AG04450 (cell line): ENCODE measurements at regions of chr1 and their contacts with region 1.

Region 1: GRCh38 chr1:200620273-200621131 is at the start of gene KIF14:
- DNase-seq: peak; percentile 61
- H3K4me3 ChIP-seq: peak within 1 kb of the TSS; percentile 90
- H3K27ac ChIP-seq: peak within 1 kb of the TSS; percentile 83
- H3K27me3 ChIP-seq: no peaks in the 10 kb centered on the region
- CTCF ChIP-seq: no peak
- polyA plus RNA-seq, gene KIF14: 1.5 and 2.9 TPM in 2 replicates

Region 2: DNA sequence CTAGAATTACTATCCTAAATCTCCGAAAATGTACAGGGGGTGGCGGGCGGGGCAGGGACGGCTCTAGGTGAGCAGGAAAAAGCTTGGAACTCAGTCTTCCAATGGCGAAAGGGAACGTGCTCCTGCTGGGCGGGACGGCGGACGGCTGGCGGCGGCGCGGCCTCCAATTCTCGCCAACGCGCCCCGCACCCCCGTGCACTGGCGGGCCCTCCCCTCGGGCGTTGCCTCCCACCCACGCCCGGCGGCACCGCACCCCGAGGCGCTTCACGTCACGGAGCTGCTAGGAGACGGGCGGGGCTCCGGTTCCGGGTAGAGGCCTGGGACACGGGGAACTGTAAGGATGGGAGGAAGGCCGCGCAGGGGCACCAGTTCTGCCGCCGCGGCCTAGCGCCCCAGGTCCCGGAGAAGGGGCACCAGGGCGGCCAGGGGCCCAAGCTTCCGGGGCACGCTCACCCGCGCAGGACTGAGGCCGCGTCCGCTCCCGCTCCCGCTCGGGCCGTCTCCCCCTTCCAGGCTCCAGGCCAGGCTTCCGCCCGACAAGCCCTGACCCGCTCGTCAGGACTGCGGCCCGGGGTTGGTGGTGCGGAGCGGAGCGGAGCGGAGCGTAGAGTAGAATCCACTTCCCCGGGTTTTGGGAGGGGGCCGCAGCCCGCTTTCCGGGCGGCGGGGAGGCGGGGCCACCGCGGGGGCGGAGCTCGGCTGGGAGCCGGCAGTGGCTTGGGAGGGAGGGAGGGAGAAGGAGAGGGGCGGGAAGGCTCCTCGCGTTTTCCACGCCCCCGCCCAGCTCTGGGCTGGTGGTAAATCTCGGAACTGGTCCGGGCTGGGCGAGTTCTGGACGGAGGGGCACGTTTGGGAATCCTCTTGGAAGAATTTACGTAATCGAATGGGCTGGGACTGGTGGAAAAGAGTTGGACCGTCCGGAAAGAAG is 49.1 kb after region 1 on chr1 and contains the start of gene DDX59:
- CTCF ChIA-PET with region 1: interaction called, 10 read pairs
- POLR2A ChIA-PET with region 1: interaction called, 29 read pairs
- DNase-seq: peak; percentile 94
- H3K4me3 ChIP-seq: peak within 1 kb of the TSS; percentile 86
- H3K27ac ChIP-seq: peak within 1 kb of the TSS; percentile 98
- H3K27me3 ChIP-seq: no peaks in the 10 kb centered on the region
- CTCF ChIP-seq: no peak
- polyA plus RNA-seq, gene DDX59: 10.8 and 15.0 TPM in 2 replicates

Region 3: DNA sequence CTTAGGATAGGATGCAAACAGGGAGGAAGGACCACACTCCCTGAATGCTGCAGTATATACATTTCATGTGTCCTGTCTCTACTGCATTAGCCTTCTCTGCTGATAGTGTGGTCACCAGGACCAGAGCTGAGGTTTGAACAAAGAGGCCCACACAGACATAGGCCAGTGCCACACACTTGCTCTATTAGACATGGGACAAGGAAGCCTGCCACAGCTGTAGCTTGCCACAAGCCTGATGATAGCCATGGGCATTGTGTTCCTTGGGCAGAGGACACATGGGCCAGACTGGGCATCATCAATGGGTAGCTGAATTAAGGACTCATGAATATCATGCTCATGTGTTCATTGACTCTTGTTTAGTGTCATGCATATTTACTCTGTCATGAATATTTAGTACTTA is 128.6 kb after region 1 on chr1:
- CTCF ChIA-PET with region 1: interaction called, 12 read pairs
- POLR2A ChIA-PET with region 1: no interaction called
- DNase-seq: no peak
- H3K4me3 ChIP-seq: no peak overlapping the region
- H3K27ac ChIP-seq: no peak overlapping the region
- H3K27me3 ChIP-seq: no peaks in the 10 kb centered on the region
- CTCF ChIP-seq: no peak

Region 4: DNA sequence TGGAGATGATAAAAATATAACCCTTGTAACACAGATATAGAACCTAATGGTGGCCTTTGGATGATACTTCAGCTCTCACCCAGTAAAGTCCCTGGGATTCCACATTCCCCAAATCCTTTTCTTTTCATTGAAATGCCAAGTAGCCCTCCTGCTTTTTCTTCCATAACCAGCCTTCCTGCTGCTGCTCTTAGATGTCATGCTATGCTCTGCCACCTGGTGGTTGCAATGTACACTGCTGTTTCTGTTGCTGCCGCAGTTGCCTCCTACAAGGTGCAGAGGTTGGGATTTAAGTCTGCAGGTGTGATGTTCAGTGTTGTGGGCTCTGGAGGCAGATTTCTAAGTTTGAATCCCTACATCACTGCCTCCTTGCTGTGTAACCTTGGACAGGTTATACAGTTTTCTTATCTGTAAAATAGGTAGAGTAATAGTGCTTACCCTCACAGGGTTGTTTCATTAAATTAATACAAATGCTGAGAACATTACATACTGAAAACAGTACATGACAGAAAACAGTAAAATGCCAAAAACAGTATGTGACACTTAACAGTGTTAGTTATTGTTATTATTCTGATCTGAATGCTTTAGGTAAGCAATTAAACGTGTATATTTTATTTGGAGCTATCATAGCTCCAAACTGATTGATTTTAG is 182.5 kb after region 1 on chr1:
- CTCF ChIA-PET with region 1: interaction called, 76 read pairs
- POLR2A ChIA-PET with region 1: interaction called, 5 read pairs
- DNase-seq: peak; percentile 61
- H3K4me3 ChIP-seq: no peak overlapping the region
- H3K27ac ChIP-seq: no peak overlapping the region
- H3K27me3 ChIP-seq: no peaks in the 10 kb centered on the region
- CTCF ChIP-seq: peak; percentile 97

Region 5: GRCh38 chr1:200837931-200838571 is 217.5 kb after region 1 on chr1:
- CTCF ChIA-PET with region 1: interaction called, 89 read pairs
- POLR2A ChIA-PET with region 1: no interaction called
- DNase-seq: no peak
- H3K4me3 ChIP-seq: no peak overlapping the region
- H3K27ac ChIP-seq: no peak overlapping the region
- H3K27me3 ChIP-seq: no peaks in the 10 kb centered on the region
- CTCF ChIP-seq: peak; percentile 52

Region 6: GRCh38 chr1:201042779-201043461 is 422.4 kb after region 1 on chr1:
- CTCF ChIA-PET with region 1: interaction called, 20 read pairs
- POLR2A ChIA-PET with region 1: no interaction called
- DNase-seq: peak; percentile 47
- H3K4me3 ChIP-seq: no peak overlapping the region
- H3K27ac ChIP-seq: no peak overlapping the region
- H3K27me3 ChIP-seq: peaks cover 13% of the 10 kb centered on the region
- CTCF ChIP-seq: peak; percentile 90